ENCODE measurements at regions of chr13 and their contacts with region 1.

Region 1: DNA sequence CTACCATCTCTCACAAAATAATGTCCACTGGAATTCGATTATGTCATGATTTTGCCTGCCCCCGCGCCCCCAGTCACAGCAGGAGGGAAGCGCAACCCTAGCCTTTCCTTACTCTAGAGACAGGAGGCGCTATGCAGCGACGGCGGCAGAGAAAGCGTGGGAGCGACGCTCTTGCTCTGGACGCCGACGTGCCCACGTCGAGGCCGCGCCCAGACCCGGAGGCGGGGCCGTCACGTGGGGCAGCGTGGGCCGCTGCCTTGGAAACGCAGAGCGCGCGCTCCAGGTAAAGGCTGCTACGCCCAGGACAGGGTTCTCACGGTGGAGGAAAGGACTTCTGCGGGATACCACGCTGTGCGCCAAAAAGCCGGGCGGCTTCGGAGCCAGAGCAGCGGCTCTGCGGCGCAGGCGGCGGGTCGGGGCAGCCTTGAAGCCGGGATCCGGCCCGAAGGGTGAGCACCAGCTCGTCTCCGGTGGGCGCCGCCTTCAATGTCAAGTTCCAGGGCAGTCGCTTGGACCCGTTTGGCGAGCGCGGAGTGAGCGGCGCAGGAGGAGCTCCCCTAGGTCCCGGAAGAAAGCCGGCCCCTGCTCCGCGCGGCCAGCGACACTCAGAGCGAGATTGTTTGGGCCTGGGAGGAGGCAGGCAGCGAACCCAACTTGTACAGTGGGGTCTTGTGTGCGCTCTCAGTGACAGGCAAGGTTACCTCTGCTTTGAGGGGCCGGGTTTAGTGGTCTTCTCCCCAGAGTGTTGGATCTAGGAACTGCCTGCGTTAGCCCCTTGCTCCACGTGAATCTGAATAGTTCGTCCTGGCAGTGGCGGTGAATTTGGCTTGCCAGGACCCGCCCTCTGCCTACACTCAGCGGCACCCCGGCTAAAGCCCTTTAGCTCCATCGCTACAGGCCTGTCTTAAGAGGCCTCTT is 121.7 kb downstream of the MRPL57 start:
- DNase-seq: peak; percentile 64 to 95 (median 84)
- ATAC-seq: peak; percentile 96
- H3K4me3 ChIP-seq: peak overlapping the region; percentile 69 to 78
- H3K4me3 Mint-ChIP-seq: peak overlapping the region; percentile 89
- H3K27ac ChIP-seq: peak overlapping the region; percentile 47 to 74
- H3K27ac Mint-ChIP-seq: peak overlapping the region; percentile 74
- H3K4me1 ChIP-seq: peaks cover 14% of the 10 kb centered on the region
- H3K4me1 Mint-ChIP-seq: peaks cover 18% of the 10 kb centered on the region
- H3K27me3 ChIP-seq: no peaks in the 10 kb centered on the region
- H3K27me3 Mint-ChIP-seq: no peaks in the 10 kb centered on the region
- CTCF ChIP-seq: peak; percentile 94

Region 2: GRCh38 chr13:19863323-19864023 is 1434.7 kb before region 1 on chr13 and contains the start of gene ZMYM5:
- CTCF ChIA-PET with region 1: no interaction called
- POLR2A ChIA-PET with region 1: no interaction called
- intact Hi-C with region 1: loop called in 1 of 2 experiments (anchors 5 kb)
- DNase-seq: peak; percentile 85 to 98 (median 95)
- ATAC-seq: peak; percentile 83
- H3K4me3 ChIP-seq: peak within 1 kb of the TSS; percentile 64 to 74
- H3K4me3 Mint-ChIP-seq: peak within 1 kb of the TSS; percentile 90
- H3K27ac ChIP-seq: peak within 1 kb of the TSS; percentile 78 to 97
- H3K27ac Mint-ChIP-seq: peak within 1 kb of the TSS; percentile 97
- H3K4me1 ChIP-seq: peaks cover 25% of the 10 kb centered on the region
- H3K4me1 Mint-ChIP-seq: peaks cover 35% of the 10 kb centered on the region
- H3K27me3 ChIP-seq: no peaks in the 10 kb centered on the region
- H3K27me3 Mint-ChIP-seq: no peaks in the 10 kb centered on the region
- CTCF ChIP-seq: no peak
- total RNA-seq, gene ZMYM5: 25.1 to 25.8 TPM

Region 3: DNA sequence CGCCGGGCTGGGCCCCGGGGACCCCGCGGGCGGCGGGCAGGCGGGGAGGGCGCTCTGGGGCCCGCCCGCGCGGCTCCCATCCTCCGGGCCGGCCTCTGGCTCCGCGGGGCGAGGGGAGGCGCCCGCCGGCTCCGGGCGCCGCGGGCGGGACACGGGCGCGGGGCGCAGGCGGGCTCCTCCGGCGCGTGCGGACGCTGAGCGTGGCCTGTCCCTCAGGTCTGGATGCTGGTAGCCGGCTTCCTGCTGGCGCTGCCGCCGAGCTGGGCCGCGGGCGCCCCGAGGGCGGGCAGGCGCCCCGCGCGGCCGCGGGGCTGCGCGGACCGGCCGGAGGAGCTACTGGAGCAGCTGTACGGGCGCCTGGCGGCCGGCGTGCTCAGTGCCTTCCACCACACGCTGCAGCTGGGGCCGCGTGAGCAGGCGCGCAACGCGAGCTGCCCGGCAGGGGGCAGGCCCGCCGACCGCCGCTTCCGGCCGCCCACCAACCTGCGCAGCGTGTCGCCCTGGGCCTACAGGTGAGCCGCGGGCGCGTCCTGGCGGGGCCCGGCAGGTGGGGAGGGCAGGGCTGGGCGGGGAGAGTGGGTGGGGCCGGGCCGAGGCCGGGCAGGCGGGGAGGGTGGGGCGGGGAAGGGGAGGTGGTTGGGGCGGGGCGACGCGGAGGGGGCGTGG is 594.3 kb before region 1 on chr13:
- CTCF ChIA-PET with region 1: no interaction called
- POLR2A ChIA-PET with region 1: no interaction called
- intact Hi-C with region 1: loop called in 1 of 2 experiments (anchors 5 kb)
- DNase-seq: peak; percentile 56 to 90 (median 76)
- ATAC-seq: peak; percentile 86
- H3K4me3 ChIP-seq: no peak overlapping the region
- H3K4me3 Mint-ChIP-seq: no peak overlapping the region
- H3K27ac ChIP-seq: no peak overlapping the region
- H3K27ac Mint-ChIP-seq: no peak overlapping the region
- H3K4me1 ChIP-seq: peaks cover 11% of the 10 kb centered on the region
- H3K4me1 Mint-ChIP-seq: peaks cover 15% of the 10 kb centered on the region
- H3K27me3 ChIP-seq: peaks cover 0 to 3% of the 10 kb centered on the region in 2 experiments
- H3K27me3 Mint-ChIP-seq: peaks cover 12% of the 10 kb centered on the region
- CTCF ChIP-seq: peak; percentile 31

Region 4: DNA sequence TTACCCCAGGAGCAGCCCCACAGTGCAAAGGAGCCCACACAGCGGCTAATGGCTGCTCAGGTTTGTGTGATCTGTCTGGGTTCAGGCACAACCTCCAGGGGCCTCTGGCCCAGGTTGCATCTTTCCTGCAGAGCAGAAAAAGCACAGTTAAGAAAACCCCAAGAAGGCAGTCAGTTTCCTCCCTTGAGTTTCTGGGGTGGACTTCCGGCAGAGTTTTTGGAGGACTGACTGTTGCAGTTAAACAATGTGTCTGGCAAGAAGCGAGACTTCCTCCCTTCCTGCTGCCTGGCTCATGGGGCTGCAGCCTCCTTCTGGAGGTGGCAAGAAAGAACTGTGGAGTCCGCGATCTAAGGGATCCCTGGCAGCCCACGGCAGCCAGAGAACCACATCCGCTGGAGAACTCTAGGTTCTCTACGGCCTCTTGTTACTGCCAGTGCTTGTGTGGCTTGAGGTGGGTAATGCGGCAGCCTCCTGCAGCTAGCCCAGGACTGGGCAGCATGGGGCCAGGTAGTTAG is 46.5 kb after region 1 on chr13:
- CTCF ChIA-PET with region 1: interaction called, 5 read pairs
- POLR2A ChIA-PET with region 1: no interaction called
- intact Hi-C with region 1: loop called in 1 of 2 experiments (anchors 2 kb)
- DNase-seq: peak; percentile 1 to 74 (median 33)
- ATAC-seq: peak; percentile 77
- H3K4me3 ChIP-seq: peak overlapping the region; percentile 10 to 35
- H3K4me3 Mint-ChIP-seq: peak overlapping the region; percentile 70
- H3K27ac ChIP-seq: peak overlapping the region; percentile 18 to 76
- H3K27ac Mint-ChIP-seq: peak overlapping the region; percentile 88
- H3K4me1 ChIP-seq: peaks cover 25% of the 10 kb centered on the region
- H3K4me1 Mint-ChIP-seq: peaks cover 34% of the 10 kb centered on the region
- H3K27me3 ChIP-seq: no peaks in the 10 kb centered on the region
- H3K27me3 Mint-ChIP-seq: no peaks in the 10 kb centered on the region
- CTCF ChIP-seq: no peak

Region 5: DNA sequence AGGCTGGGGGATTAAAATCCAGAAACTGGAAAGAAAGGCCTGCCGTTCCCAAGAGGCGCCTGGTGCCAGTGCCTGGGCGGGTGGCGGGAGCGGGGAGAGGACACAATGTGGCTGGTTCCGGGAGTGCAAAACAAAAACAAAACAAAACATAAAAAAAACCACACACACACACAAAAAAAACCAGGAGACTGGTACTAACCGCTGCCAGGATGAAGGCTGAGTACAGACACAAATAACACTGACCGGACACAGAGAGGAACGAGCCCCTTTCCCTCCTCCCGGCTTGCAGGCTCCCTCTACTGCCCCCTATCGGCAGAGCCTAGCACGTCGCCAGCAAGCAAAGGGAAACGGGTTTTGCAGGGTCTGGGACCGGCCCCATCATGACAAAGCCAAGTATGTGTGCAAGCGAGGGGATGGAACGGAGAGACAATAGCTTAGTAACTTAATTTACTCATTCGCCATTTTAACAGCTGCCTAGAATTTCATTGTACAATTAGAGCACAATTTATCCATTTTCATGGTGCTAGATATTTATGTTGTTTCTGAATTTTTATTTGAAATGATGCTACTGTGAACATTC is 178.8 kb after region 1 on chr13:
- CTCF ChIA-PET with region 1: interaction called, 42 read pairs
- POLR2A ChIA-PET with region 1: interaction called, 6 read pairs
- intact Hi-C with region 1: loop called (anchors 1 kb)
- DNase-seq: peak; percentile 55 to 87 (median 80)
- ATAC-seq: peak; percentile 87
- H3K4me3 ChIP-seq: peak overlapping the region; percentile 24 to 40
- H3K4me3 Mint-ChIP-seq: peak overlapping the region; percentile 81
- H3K27ac ChIP-seq: no peak overlapping the region
- H3K27ac Mint-ChIP-seq: no peak overlapping the region
- H3K4me1 ChIP-seq: peaks cover 11% of the 10 kb centered on the region
- H3K4me1 Mint-ChIP-seq: peaks cover 19% of the 10 kb centered on the region
- H3K27me3 ChIP-seq: no peaks in the 10 kb centered on the region
- H3K27me3 Mint-ChIP-seq: peaks cover 2% of the 10 kb centered on the region
- CTCF ChIP-seq: peak; percentile 96